ENCODE measurements at regions of chr12 and their contacts with region 1.

Region 1: GRCh38 chr12:102690253-102690652 is 209.9 kb upstream of the IGF1 start:
- DNase-seq: peak; percentile 53
- H3K4me3 Mint-ChIP-seq: peak overlapping the region; percentile 2
- H3K27ac Mint-ChIP-seq: peak overlapping the region; percentile 21
- H3K4me1 Mint-ChIP-seq: peaks cover 40% of the 10 kb centered on the region
- H3K27me3 Mint-ChIP-seq: no peaks in the 10 kb centered on the region
- CTCF ChIP-seq: no peak

Region 2: DNA sequence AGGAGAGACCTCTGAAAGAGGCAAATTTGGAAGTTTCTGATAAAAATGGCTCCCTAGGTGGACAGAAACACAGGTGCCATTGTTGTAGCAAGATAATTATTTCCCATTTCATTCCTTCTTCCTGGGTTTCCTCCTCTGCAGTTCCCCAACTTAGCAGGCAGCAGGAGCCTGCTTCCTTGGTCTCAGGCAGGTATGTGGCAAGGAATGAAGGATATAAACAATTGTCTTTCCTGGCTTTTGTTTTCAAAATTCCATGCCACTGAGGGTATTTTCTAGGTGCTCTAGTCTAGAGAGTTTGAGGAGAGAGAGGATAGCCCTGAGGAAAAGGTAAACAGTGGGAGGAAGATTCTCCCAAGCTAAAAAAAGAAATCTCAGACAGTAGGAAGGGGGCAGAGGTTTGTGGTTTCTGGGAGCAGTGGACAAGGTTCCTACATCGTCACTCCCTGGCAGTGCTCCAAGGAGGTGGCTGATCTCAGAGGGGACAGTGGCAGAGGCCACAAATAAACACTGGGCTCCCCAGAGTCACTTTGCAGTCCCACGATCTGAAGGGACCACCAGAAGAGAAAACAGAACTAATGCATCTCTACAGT is 127.3 kb before region 1 on chr12:
- CTCF ChIA-PET with region 1: no interaction called
- intact Hi-C with region 1: loop called (anchors 5 kb)
- DNase-seq: peak; percentile 69
- H3K4me3 Mint-ChIP-seq: peak overlapping the region; percentile 11
- H3K27ac Mint-ChIP-seq: peak overlapping the region; percentile 50
- H3K4me1 Mint-ChIP-seq: peaks cover 42% of the 10 kb centered on the region
- H3K27me3 Mint-ChIP-seq: no peaks in the 10 kb centered on the region
- CTCF ChIP-seq: no peak

Region 3: DNA sequence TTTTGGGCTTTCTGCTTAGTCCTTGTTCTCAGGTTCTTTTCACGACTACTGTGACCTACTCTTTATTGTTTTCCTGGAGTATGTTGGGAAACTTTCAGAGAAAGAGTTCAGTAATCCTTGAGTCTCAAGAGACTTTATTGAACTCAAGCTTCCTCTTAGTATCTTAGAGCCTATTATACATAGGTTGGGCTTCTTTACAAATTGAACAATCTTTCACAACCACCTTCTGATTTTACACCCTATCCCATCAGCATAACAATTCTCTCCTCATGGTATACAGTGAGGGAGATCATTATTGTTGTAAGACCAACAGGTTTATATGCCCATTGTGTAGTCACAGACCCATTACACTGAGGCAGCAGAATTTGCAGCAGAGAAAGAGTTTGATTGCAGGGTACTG is 16.6 kb before region 1 on chr12:
- CTCF ChIA-PET with region 1: no interaction called
- intact Hi-C with region 1: loop called (anchors 1 kb)
- DNase-seq: no peak
- H3K4me3 Mint-ChIP-seq: no peak overlapping the region
- H3K27ac Mint-ChIP-seq: peak overlapping the region; percentile 25
- H3K4me1 Mint-ChIP-seq: peaks cover 29% of the 10 kb centered on the region
- H3K27me3 Mint-ChIP-seq: no peaks in the 10 kb centered on the region
- CTCF ChIP-seq: no peak

Region 4: GRCh38 chr12:102896067-102896466 is 205.8 kb after region 1 on chr12:
- CTCF ChIA-PET with region 1: no interaction called
- intact Hi-C with region 1: no loop called
- DNase-seq: no peak
- H3K4me3 Mint-ChIP-seq: no peak overlapping the region
- H3K27ac Mint-ChIP-seq: no peak overlapping the region
- H3K4me1 Mint-ChIP-seq: no peaks in the 10 kb centered on the region
- H3K27me3 Mint-ChIP-seq: no peaks in the 10 kb centered on the region
- CTCF ChIP-seq: no peak

Measured in Calu3 (cell line).